Activated CD4-positive, alpha-beta T cell treated with anti-CD3 and anti-CD28 coated beads for 36 hours (primary cell): ENCODE measurements at regions of chr7 and their contacts with region 1.

Region 1: DNA sequence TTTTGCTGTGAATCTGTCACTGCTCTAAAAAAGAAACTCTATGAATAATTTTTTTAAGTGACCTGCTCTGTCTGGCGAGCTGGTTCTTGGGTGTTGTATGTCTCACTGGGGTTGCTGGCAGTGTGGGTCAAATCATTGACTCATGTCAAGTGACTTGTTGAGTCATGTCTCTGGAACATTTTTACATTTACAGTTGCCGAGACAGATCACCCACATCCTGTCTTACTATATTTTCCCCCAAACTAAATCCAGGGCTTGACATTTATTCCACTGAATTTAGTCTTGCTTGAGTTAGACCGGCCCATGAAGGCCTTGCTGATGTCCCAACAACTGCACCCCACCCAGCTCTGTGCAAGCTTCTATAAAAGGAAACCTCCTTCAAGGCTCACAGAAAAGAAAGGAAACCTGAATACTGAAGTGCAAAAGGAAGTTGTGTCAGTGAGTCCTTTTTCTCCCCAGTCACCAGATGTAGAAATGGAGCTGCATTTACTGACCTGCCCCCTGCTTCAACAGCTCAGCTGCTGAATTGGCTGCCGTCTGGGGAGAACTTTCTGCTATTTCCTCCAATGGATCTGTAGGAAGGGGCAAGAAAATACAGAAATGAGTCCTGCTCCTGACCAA is 290.3 kb downstream of the TNS3 start:
- DNase-seq: peak; percentile 54
- ATAC-seq: peak; percentile 93
- H3K4me3 Mint-ChIP-seq: peak overlapping the region; percentile 12
- H3K27ac Mint-ChIP-seq: peak overlapping the region; percentile 55
- H3K4me1 Mint-ChIP-seq: peaks cover 16% of the 10 kb centered on the region
- H3K27me3 Mint-ChIP-seq: no peaks in the 10 kb centered on the region

Region 2: DNA sequence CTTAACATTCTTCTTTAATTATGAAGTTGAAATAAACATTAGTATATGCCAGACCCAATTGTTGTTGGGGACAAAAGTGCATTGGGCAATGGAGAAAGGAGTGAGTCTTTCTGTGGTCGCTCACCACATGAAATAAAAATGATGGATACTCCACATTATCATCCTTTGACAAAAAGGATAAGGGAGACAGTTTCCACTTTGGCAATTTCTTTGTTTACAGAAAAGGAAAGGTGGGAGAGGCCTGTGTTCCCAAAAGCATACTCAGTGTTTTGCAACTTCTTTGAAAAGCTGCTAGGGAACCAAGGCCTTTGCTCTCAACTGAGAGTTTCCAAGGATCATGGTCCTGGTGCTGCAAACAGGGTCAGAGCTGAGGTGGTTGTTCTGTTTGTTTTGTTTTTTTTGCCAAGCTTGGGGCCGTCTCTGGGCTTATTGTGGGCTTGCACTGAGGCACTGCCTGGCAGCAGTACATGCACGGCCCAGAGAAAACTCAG is 51.6 kb before region 1 on chr7:
- CTCF ChIA-PET with region 1: no interaction called
- POLR2A ChIA-PET with region 1: no interaction called
- intact Hi-C with region 1: no loop called
- DNase-seq: no peak
- ATAC-seq: no peak
- H3K4me3 Mint-ChIP-seq: no peak overlapping the region
- H3K27ac Mint-ChIP-seq: no peak overlapping the region
- H3K4me1 Mint-ChIP-seq: no peaks in the 10 kb centered on the region
- H3K27me3 Mint-ChIP-seq: no peaks in the 10 kb centered on the region

Region 3: DNA sequence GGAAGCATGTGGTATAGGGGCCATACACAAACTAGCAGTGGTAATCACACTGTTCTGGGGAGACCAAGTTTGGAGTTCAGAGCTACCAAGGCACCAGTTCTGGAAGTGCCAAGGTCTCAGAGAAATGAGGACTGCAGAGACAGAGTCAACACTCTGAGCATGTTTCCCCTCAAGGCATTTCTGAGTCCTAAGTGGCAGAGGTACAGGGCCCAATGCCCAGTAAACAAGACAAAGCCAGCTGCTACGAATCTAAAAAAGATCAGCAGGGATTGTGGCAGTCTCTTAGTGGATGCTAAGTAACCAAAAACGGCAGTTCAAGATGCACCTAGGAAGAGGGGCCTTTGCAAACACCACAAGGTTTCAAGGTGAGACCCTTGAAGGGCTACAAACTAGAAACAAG is 18.4 kb after region 1 on chr7:
- CTCF ChIA-PET with region 1: no interaction called
- POLR2A ChIA-PET with region 1: no interaction called
- intact Hi-C with region 1: loop called in 1 of 2 experiments (anchors 2 kb)
- DNase-seq: no peak
- ATAC-seq: no peak
- H3K4me3 Mint-ChIP-seq: no peak overlapping the region
- H3K27ac Mint-ChIP-seq: no peak overlapping the region
- H3K4me1 Mint-ChIP-seq: no peaks in the 10 kb centered on the region
- H3K27me3 Mint-ChIP-seq: peaks cover 3% of the 10 kb centered on the region

Region 4: GRCh38 chr7:47361746-47362215 is 70.2 kb after region 1 on chr7:
- CTCF ChIA-PET with region 1: no interaction called
- POLR2A ChIA-PET with region 1: no interaction called
- intact Hi-C with region 1: loop called (anchors 1 to 2 kb)
- DNase-seq: peak; percentile 75
- ATAC-seq: peak; percentile 90
- H3K4me3 Mint-ChIP-seq: no peak overlapping the region
- H3K27ac Mint-ChIP-seq: peak overlapping the region; percentile 43
- H3K4me1 Mint-ChIP-seq: no peaks in the 10 kb centered on the region
- H3K27me3 Mint-ChIP-seq: no peaks in the 10 kb centered on the region

Region 5: GRCh38 chr7:47405921-47406792 is 114.6 kb after region 1 on chr7:
- CTCF ChIA-PET with region 1: no interaction called
- POLR2A ChIA-PET with region 1: no interaction called
- intact Hi-C with region 1: no loop called
- DNase-seq: no peak
- ATAC-seq: no peak
- H3K4me3 Mint-ChIP-seq: no peak overlapping the region
- H3K27ac Mint-ChIP-seq: no peak overlapping the region
- H3K4me1 Mint-ChIP-seq: peaks cover 8% of the 10 kb centered on the region
- H3K27me3 Mint-ChIP-seq: no peaks in the 10 kb centered on the region

Region 6: DNA sequence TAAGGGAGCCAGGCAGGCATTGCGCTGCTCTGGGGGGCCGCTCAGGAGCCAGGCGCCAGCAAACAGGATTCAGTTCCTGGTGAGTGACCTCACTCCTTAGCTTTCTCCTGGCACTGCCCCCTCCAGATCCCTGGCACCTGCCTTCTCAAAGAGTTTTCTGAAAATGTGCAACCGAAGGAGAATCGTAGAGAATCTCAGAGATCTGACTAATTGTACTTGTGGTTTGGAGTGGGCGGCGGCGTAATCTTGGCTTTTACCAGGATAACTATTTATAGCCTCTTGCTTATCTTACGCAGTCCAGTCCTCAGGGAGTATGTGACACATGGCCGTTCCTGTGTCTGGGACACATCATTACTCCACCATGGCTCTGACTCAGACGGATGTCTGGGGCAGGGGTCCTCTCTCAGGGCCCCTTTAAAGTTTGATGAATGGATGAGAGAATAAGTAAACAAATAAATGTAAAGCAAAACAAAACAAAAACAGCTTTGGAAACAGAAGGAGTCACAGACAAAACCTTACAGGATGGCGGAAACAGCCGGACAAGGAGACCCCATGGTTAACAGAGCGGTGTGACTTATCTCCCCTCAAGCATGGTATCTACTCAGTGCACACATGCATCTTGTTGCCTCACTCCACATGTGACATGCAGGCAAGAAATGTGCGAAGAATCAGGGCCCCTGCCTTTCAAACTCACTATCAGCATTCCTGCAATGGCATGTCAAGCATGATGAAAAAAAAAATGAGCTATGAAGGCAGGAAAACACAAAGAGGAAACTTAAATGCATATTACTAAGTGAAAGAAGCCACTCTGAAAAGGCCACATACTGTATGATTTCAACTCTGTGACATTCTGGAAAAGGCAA is 190.7 kb after region 1 on chr7:
- CTCF ChIA-PET with region 1: no interaction called
- POLR2A ChIA-PET with region 1: no interaction called
- intact Hi-C with region 1: loop called in 1 of 2 experiments (anchors 5 kb)
- DNase-seq: peak; percentile 65
- ATAC-seq: peak; percentile 76
- H3K4me3 Mint-ChIP-seq: no peak overlapping the region
- H3K27ac Mint-ChIP-seq: no peak overlapping the region
- H3K4me1 Mint-ChIP-seq: peaks cover 16% of the 10 kb centered on the region
- H3K27me3 Mint-ChIP-seq: peaks cover 2% of the 10 kb centered on the region